ENCODE measurements at regions of chrX and their contacts with region 1.

Region 1: GRCh38 chrX:63738696-63739095 is 46.3 kb downstream of the ARHGEF9 start:
- DNase-seq: peak; percentile 6
- ATAC-seq: no peak
- H3K4me3 ChIP-seq: no peak overlapping the region
- H3K27ac ChIP-seq: no peak overlapping the region
- H3K4me1 ChIP-seq: peaks cover 2% of the 10 kb centered on the region; the same call in 1 of the 2 replicates
- H3K27me3 ChIP-seq: peaks cover 3% of the 10 kb centered on the region; the same call in 1 of the 2 replicates
- CTCF ChIP-seq: no peak
- POLR2A ChIP-seq: no peak
- RAD21 ChIP-seq: no peak

Region 2: GRCh38 chrX:63275127-63275526 is 463.6 kb before region 1 on chrX:
- CTCF ChIA-PET with region 1: no interaction called
- POLR2A ChIA-PET with region 1: no interaction called
- dilution Hi-C with region 1: no loop called
- in situ Hi-C with region 1: no loop called
- intact Hi-C with region 1: no loop called
- DNase-seq: peak; percentile 10
- ATAC-seq: peak; percentile 60; the same call in 1 of the 2 replicates
- H3K4me3 ChIP-seq: no peak overlapping the region
- H3K27ac ChIP-seq: no peak overlapping the region
- H3K4me1 ChIP-seq: no peaks in the 10 kb centered on the region
- H3K27me3 ChIP-seq: no peaks in the 10 kb centered on the region
- CTCF ChIP-seq: peak; percentile 52
- POLR2A ChIP-seq: no peak
- RAD21 ChIP-seq: peak; percentile 47

Region 3: GRCh38 chrX:63657821-63658220 is 80.9 kb before region 1 on chrX:
- CTCF ChIA-PET with region 1: no interaction called
- POLR2A ChIA-PET with region 1: no interaction called
- dilution Hi-C with region 1: no loop called
- in situ Hi-C with region 1: no loop called
- intact Hi-C with region 1: loop called (anchors 10 kb)
- DNase-seq: peak; percentile 78
- ATAC-seq: peak; percentile 58
- H3K4me3 ChIP-seq: no peak overlapping the region
- H3K27ac ChIP-seq: no peak overlapping the region
- H3K4me1 ChIP-seq: no peaks in the 10 kb centered on the region; the same call in 1 of the 2 replicates
- H3K27me3 ChIP-seq: no peaks in the 10 kb centered on the region
- CTCF ChIP-seq: no peak
- POLR2A ChIP-seq: no peak
- RAD21 ChIP-seq: no peak

Region 4: DNA sequence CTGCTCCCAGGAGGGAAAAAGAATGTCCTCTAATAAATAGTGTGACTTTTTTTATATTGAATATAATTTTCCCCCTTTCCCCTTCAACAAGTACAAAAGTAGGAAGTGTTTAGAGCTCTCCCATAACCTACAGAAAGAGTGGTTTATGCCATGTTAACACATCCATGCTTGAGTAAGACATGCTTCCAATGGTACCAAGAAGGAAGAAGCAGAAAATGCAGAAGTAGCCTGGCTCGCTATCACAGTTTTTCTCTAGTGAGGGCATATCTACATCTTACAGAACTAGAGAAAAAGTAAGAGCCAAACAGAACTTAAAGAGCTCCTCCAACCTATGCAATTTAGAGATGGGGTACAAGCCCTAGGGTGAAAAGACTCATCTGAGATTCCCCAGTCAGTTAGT is 36.1 kb before region 1 on chrX:
- CTCF ChIA-PET with region 1: no interaction called
- POLR2A ChIA-PET with region 1: no interaction called
- dilution Hi-C with region 1: no loop called
- in situ Hi-C with region 1: no loop called
- intact Hi-C with region 1: no loop called
- DNase-seq: no peak
- ATAC-seq: no peak
- H3K4me3 ChIP-seq: no peak overlapping the region
- H3K27ac ChIP-seq: no peak overlapping the region
- H3K4me1 ChIP-seq: no peaks in the 10 kb centered on the region
- H3K27me3 ChIP-seq: no peaks in the 10 kb centered on the region
- CTCF ChIP-seq: no peak
- POLR2A ChIP-seq: no peak
- RAD21 ChIP-seq: no peak

Region 5: DNA sequence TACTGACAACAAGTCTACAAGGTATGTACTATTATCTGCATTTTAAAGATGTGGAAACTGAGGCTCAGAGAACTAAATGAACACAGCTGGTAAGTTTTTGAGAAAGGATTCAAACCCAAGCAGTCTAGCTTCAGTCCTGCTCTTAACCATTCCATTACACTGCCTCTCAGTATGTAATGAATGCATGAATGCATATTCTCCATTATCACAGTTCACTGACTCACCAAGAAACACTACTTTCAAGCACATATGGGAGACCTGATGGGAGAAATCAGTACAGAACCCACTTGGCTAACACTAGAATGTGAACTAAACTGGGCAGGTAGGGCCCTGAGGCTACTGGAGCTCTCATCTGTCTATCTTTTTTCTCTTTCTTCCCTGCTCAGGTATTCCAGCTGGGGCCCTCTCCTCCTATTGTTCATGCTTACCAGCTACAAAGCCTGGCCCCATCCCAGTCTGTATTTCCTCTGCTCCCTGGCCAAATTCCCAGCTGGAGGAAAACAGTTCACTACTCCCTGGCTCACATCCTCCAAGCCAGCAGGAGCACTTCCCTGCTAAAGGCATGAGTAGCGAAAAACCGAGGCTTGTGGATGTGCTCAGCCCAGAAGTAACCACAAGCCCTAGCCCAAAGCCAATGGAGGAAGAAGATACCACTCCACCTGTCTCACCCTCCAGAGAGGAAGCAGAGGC is 224.5 kb after region 1 on chrX:
- CTCF ChIA-PET with region 1: no interaction called
- POLR2A ChIA-PET with region 1: no interaction called
- dilution Hi-C with region 1: no loop called
- in situ Hi-C with region 1: no loop called
- intact Hi-C with region 1: no loop called
- DNase-seq: no peak
- ATAC-seq: no peak
- H3K4me3 ChIP-seq: no peak overlapping the region
- H3K27ac ChIP-seq: no peak overlapping the region
- H3K4me1 ChIP-seq: no peaks in the 10 kb centered on the region
- H3K27me3 ChIP-seq: no peaks in the 10 kb centered on the region
- CTCF ChIP-seq: no peak
- POLR2A ChIP-seq: no peak
- RAD21 ChIP-seq: no peak

Region 6: DNA sequence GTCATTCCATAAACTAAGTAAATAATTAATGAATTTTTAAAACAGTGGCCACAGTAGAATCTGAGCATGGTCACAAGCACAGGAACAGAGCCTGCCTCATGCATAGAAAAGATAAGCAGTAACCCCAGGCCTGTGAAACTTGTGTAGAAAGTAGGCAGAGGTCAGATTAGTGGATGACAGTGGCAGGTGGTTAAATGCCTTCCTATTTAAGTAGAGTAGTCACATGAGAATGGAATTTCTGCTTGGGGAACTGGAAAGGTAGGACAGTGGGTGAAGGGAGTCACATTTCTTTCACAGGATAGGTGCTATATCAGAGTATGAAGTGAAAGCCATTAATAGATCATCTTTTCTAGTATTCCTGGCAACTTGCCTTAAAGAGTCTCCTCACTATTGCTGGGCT is 526.5 kb after region 1 on chrX:
- CTCF ChIA-PET with region 1: no interaction called
- POLR2A ChIA-PET with region 1: no interaction called
- dilution Hi-C with region 1: no loop called
- in situ Hi-C with region 1: no loop called
- intact Hi-C with region 1: no loop called
- DNase-seq: no peak
- ATAC-seq: no peak
- H3K4me3 ChIP-seq: no peak overlapping the region
- H3K27ac ChIP-seq: no peak overlapping the region
- H3K4me1 ChIP-seq: no peaks in the 10 kb centered on the region
- H3K27me3 ChIP-seq: no peaks in the 10 kb centered on the region
- CTCF ChIP-seq: no peak
- POLR2A ChIP-seq: no peak
- RAD21 ChIP-seq: no peak

Measured in IMR-90 (cell line).